Activated B cell treated with CpG ODN at 0.5 μM for 24 hours (primary cell): ENCODE measurements at regions of chr2 and their contacts with region 1.

Region 1: GRCh38 chr2:151289369-151290088 is at the start of gene NMI:
- DNase-seq: peak; percentile 75
- ATAC-seq: peak; percentile 76
- H3K4me3 Mint-ChIP-seq: peak within 1 kb of the TSS; percentile 85
- H3K27ac Mint-ChIP-seq: peak within 1 kb of the TSS; percentile 94
- H3K4me1 Mint-ChIP-seq: peaks cover 44% of the 10 kb centered on the region
- H3K27me3 Mint-ChIP-seq: no peaks in the 10 kb centered on the region
- CTCF ChIP-seq: no peak
- total RNA-seq, gene NMI: 34.6 and 36.7 TPM in 2 replicates

Region 2: DNA sequence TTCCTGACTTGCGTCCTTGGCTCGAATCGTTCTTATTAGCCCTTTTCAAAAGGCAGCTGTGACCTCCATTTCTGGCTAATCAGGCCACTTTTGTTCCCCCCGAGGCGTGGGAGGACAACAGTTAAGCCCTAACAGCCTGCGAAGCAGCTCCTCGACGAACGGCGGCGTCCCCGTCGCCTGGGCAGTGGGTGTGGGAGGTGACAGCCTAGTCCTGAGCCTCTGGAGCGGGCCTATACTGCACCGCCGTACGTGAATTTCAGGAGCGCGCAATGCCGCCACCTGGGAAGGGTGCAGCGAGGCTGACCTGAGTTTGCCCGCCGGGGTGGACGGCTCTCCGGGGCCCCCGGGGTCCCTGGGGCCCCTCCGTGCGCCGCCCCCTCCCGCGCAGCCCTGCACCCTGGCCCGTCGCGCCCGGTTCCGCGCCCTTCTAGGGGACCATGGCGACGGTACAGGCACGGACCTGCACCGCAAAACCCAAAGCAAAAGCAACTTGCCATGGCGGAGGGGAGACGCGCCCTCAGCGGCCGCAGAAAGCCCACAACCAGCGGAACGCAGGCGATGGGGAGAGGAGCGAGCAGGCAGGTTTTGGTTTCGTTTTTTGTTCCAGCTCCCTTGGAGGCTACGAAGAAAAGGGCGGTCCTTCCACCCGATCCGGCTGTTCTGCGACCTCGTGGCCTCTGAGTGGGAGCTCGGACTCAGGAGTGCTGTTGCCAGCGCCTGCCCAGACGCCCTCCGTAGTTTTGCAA is 28.1 kb before region 1 on chr2 and contains the start of gene RBM43:
- CTCF ChIA-PET with region 1: no interaction called
- POLR2A ChIA-PET with region 1: interaction called, 74 read pairs
- intact Hi-C with region 1: loop called (anchors 1 kb)
- DNase-seq: peak; percentile 58
- ATAC-seq: peak; percentile 90
- H3K4me3 Mint-ChIP-seq: peak within 1 kb of the TSS; percentile 93
- H3K27ac Mint-ChIP-seq: peak within 1 kb of the TSS; percentile 94
- H3K4me1 Mint-ChIP-seq: peaks cover 20% of the 10 kb centered on the region
- H3K27me3 Mint-ChIP-seq: no peaks in the 10 kb centered on the region
- CTCF ChIP-seq: no peak
- total RNA-seq, gene RBM43: 4.8 and 5.0 TPM in 2 replicates

Region 3: GRCh38 chr2:151269798-151270568 is 19.5 kb before region 1 on chr2:
- CTCF ChIA-PET with region 1: no interaction called
- POLR2A ChIA-PET with region 1: interaction called, 14 read pairs
- intact Hi-C with region 1: no loop called
- DNase-seq: no peak
- ATAC-seq: no peak
- H3K4me3 Mint-ChIP-seq: no peak overlapping the region
- H3K27ac Mint-ChIP-seq: peak overlapping the region; percentile 46
- H3K4me1 Mint-ChIP-seq: no peaks in the 10 kb centered on the region
- H3K27me3 Mint-ChIP-seq: no peaks in the 10 kb centered on the region
- CTCF ChIP-seq: no peak

Region 4: DNA sequence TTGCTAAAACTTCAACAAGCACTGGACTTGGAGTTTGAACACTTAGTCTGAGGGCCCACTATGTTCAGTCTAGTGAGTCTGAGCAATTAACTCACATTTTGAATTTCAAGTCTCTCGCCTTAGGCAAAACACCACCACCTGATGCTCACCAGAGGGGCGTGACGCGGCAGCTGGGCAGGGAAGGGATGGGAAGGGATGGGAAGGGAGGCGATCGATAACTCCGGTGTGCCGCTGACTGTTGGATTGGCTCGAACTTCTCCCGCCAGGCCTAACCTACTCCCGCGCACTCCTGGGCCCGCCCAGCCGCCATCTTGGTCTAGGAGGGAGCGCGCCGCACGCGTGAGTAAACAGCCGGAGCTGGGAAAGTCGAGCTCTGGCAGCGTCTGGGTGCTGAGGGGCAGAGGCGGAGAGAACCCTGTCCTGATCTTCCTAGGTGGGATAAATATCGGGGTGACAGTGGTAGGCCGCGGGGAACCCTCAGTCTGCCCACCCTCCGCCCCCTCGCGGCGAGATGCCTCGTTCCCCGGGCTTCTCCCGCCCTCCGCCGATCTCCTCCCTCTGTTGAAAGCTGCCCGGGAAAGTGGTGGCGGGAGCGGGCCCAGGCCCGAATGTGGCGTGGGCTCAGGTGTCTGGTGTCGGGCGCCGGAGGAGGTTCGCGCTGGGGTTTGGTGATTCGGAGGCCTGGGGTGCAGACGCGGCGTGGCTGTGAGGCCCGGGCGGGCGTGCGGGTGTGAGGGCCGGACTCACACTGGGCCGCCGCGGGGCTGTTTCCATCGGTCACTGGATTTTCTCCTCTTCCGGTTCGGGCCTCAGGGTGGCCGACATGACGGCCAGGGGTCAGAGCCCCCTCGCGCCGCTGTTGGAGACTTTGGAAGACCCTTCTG is 120.3 kb after region 1 on chr2 and contains the start of gene RIF1:
- CTCF ChIA-PET with region 1: interaction called, 3 read pairs
- POLR2A ChIA-PET with region 1: interaction called, 37 read pairs
- intact Hi-C with region 1: loop called (anchors 1 kb)
- DNase-seq: peak; percentile 73
- ATAC-seq: peak; percentile 90
- H3K4me3 Mint-ChIP-seq: peak within 1 kb of the TSS; percentile 89
- H3K27ac Mint-ChIP-seq: peak within 1 kb of the TSS; percentile 80
- H3K4me1 Mint-ChIP-seq: peaks cover 26% of the 10 kb centered on the region
- H3K27me3 Mint-ChIP-seq: no peaks in the 10 kb centered on the region
- CTCF ChIP-seq: no peak
- total RNA-seq, gene RIF1: 43.7 and 51.1 TPM in 2 replicates

Region 5: GRCh38 chr2:152418688-152419087 is 1129.2 kb after region 1 on chr2:
- CTCF ChIA-PET with region 1: no interaction called
- POLR2A ChIA-PET with region 1: interaction called, 11 read pairs
- intact Hi-C with region 1: no loop called
- DNase-seq: no peak
- ATAC-seq: no peak
- H3K4me3 Mint-ChIP-seq: no peak overlapping the region
- H3K27ac Mint-ChIP-seq: no peak overlapping the region
- H3K4me1 Mint-ChIP-seq: peaks cover 20% of the 10 kb centered on the region
- H3K27me3 Mint-ChIP-seq: no peaks in the 10 kb centered on the region
- CTCF ChIP-seq: no peak

Region 6: GRCh38 chr2:152717228-152718075 is 1427.9 kb after region 1 on chr2 and contains the start of gene PRPF40A:
- CTCF ChIA-PET with region 1: no interaction called
- POLR2A ChIA-PET with region 1: interaction called, 8 read pairs
- intact Hi-C with region 1: loop called (anchors 5 kb)
- DNase-seq: peak; percentile 97
- ATAC-seq: peak; percentile 76
- H3K4me3 Mint-ChIP-seq: peak within 1 kb of the TSS; percentile 100
- H3K27ac Mint-ChIP-seq: peak within 1 kb of the TSS; percentile 98
- H3K4me1 Mint-ChIP-seq: peaks cover 51% of the 10 kb centered on the region
- H3K27me3 Mint-ChIP-seq: no peaks in the 10 kb centered on the region
- CTCF ChIP-seq: no peak
- total RNA-seq, gene PRPF40A: 126 and 129 TPM in 2 replicates